Activated naive CD4-positive, alpha-beta T cell treated with anti-CD3 and anti-CD28 coated beads for 36 hours (primary cell): ENCODE measurements at regions of chr16 and their contacts with region 1.

Region 1: DNA sequence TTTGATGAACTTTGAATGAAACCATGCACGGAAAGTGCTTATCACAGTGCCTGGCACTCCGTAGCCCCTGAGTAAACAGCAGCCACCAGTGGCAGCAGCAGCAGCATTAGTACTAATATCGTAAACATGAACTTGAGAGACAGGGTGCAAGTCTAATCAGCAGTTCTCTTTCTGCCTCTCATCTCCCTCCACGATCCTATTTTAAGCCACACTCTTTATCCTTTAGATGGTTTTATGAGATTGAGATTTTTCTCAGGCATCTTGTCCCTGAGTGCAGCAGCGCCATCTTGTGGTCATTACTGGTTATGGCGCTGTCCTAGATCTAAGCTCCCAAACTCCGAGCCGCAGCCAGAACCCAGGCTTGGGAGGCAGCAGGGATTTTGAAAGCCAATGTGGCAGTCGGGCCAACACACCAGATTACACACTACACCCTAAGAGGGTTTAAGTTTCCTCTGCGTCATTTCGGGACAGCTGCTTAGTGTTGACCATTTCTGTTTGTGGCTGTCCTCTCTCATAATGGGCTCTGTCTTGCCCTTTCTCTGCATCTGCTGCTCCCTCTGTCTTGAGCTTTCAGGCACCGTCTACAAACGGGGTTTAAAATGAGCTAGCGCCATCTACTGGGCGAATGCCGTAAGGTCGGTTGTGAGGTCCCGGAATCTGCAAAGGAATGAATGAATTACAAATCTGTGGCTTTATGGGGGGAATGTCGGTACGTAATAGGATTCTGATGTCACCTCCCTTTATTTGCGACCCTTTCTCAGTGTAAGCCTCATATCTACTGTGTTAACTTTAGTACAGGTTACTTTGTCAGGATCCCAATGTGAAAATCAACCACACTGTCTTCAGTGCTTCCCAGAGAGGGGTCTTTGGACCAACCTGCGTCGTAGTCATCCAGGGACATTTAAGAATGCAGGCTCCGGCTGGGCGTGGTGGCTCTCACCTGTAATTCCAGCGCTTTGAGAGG is 64.5 kb downstream of the CYLD start:
- DNase-seq: peak; percentile 94
- H3K4me3 Mint-ChIP-seq: peak overlapping the region; percentile 74
- H3K27ac Mint-ChIP-seq: peak overlapping the region; percentile 51
- H3K4me1 Mint-ChIP-seq: peaks cover 10% of the 10 kb centered on the region
- H3K27me3 Mint-ChIP-seq: no peaks in the 10 kb centered on the region

Region 2: DNA sequence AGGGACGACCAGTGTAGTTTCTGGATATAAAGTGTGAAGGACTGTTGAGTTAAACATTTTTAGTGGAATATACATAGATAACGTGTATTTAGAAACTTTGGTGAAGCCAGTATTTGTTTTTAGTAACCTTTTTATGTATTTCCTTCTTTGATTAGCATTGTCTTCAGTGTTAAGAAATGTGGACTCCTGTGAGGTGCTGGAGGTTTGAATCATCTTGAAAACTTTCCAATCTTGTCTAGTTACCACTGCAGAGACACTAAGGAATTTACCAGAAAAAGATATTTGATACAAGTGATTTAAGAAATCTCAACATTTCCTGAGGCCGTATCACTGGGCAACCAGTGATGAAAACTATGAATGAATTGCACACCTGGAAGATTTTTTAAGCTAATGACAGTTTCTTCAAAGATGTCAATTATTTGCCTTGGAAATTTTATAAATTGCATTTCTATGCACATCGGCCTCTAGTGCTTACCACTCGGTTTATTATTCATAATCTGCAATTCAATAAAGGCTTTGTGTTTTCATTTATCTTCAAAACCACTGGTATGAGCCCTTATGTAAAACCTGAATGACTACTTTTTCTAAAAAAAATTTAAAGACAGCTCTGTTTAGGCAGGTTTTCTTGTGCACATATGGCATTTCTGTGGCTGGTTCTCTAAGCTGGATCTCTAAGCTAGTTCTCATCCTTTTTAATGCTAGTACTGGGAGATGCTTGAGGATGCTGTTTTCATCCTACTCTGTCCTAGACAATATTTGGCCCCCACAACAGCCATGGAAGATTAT is 571.4 kb before region 1 on chr16:
- CTCF ChIA-PET with region 1: no interaction called
- intact Hi-C with region 1: loop called (anchors 5 kb)
- DNase-seq: no peak
- H3K4me3 Mint-ChIP-seq: no peak overlapping the region
- H3K27ac Mint-ChIP-seq: no peak overlapping the region
- H3K4me1 Mint-ChIP-seq: no peaks in the 10 kb centered on the region
- H3K27me3 Mint-ChIP-seq: no peaks in the 10 kb centered on the region

Region 3: GRCh38 chr16:50377001-50377400 is 429.4 kb before region 1 on chr16:
- CTCF ChIA-PET with region 1: interaction called, 6 read pairs
- intact Hi-C with region 1: loop called (anchors 1 kb)
- DNase-seq: no peak
- H3K4me3 Mint-ChIP-seq: no peak overlapping the region
- H3K27ac Mint-ChIP-seq: no peak overlapping the region
- H3K4me1 Mint-ChIP-seq: peaks cover 3% of the 10 kb centered on the region
- H3K27me3 Mint-ChIP-seq: no peaks in the 10 kb centered on the region

Region 4: DNA sequence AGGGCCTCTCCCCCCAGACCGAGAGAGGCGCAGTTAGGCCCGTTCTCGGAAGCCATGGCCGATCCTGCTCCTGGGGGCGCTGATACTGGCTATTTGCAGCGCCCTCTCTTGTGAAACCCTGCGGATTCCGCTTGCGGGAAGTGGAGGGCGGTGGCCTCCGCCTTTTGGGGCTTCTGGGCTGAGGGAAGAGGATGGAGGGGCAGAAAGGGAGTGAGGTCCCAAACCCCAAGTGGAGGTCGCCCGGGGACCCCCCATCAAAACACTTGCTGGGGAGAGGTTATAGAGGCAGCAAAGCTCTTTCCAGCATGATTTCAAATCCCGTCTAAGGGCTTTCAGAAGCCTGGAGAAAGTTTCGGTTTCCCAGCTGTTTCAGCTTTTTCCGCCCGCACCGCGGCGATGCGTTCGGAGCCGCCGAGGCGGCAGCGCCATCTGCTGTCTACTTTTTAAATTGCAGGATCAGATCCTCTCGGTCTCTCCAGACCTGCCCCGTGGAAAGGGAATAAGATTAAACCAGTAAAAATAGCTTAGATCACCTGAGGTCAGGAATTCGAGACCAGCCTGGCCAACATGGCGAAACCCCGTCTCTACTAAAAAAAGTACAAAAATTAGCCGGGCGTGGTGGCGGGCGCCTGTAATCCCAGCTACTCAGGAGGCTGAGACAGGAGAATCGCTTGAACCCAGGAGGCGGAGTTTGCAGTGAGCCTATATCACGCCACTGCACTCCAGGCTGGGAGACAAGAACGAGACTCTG is 141.1 kb before region 1 on chr16:
- CTCF ChIA-PET with region 1: interaction called, 347 read pairs
- intact Hi-C with region 1: loop called (anchors 1 kb)
- DNase-seq: peak; percentile 89
- H3K4me3 Mint-ChIP-seq: peak overlapping the region; percentile 57
- H3K27ac Mint-ChIP-seq: peak overlapping the region; percentile 72
- H3K4me1 Mint-ChIP-seq: peaks cover 29% of the 10 kb centered on the region
- H3K27me3 Mint-ChIP-seq: no peaks in the 10 kb centered on the region

Region 5: DNA sequence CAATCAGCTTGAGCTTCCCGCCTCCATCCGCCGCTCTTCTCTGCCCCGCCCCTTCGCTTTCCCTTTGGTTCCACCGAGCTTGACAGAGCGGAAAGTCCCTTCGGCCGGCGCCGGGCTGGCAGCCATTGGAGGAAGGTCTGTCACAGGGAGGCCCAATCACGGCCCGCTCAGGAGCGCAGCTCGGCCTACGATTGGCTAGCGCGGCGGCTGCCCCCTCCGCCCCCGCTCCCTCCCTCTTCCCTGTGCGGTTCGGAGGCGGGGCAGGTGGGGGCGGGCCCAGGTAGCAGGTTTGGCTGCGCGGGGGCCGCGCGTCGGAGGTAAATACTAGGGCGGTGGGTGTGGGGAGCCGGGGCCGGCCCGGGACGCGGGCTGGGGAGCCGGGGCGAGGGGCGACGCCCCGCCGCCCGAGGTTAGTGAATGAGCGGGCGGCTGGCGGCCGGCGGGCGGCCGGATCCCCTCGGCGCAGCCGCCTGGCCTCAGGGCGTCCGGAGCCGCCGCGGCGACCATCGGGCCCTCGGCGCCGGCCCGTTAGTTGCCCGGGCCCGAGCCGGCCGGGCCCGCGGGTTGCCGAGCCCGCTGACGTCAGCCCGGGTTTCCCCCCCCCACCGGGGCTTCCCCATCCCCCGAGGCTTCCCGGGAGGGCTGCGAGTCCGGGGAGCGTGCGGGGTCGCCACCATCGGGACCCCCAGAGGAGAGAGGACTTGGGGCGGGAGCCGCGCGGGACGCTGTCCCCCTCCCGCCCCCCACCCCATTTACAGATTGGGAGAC is 64.4 kb before region 1 on chr16 and contains the start of gene CYLD:
- CTCF ChIA-PET with region 1: interaction called, 54 read pairs
- intact Hi-C with region 1: loop called (anchors 1 kb)
- DNase-seq: peak; percentile 100
- H3K4me3 Mint-ChIP-seq: peak within 1 kb of the TSS; percentile 90
- H3K27ac Mint-ChIP-seq: peak within 1 kb of the TSS; percentile 96
- H3K4me1 Mint-ChIP-seq: peaks cover 42% of the 10 kb centered on the region
- H3K27me3 Mint-ChIP-seq: no peaks in the 10 kb centered on the region
- total RNA-seq, gene CYLD: 70.8 to 71.9 TPM

Region 6: GRCh38 chr16:50781043-50781442 is 25.3 kb before region 1 on chr16:
- CTCF ChIA-PET with region 1: interaction called, 44 read pairs
- intact Hi-C with region 1: no loop called
- DNase-seq: peak; percentile 48
- H3K4me3 Mint-ChIP-seq: peak overlapping the region; percentile 18
- H3K27ac Mint-ChIP-seq: peak overlapping the region; percentile 70
- H3K4me1 Mint-ChIP-seq: peaks cover 51% of the 10 kb centered on the region
- H3K27me3 Mint-ChIP-seq: no peaks in the 10 kb centered on the region

Region 7: DNA sequence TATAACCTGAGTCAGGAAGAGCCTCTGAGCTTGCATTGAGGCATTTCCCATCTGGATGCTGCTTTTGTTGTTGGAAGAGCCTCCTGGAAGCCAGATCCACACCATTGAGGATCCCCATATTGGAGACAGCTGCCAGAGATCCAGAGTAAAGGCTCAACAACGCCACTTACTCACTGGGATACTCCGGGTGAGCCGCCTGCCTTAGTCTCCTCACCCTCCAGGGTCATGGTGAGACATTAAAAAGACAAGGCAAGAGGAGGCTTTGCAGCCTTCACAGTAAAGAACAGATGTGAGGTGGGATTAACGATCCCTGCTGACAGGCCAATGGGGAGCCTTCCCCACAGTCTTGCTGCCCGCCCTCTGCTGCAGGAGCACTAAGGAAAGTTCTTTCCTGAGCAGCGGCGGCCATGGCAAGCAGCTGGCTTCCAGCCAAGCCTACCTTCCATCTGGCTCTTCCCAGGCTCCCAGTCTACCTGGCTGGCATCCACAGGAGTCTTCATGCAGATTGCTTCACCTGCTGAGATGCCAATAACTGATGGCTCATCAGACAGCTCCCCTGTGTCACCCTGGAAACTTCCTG is 134.0 kb after region 1 on chr16:
- CTCF ChIA-PET with region 1: no interaction called
- intact Hi-C with region 1: no loop called
- DNase-seq: no peak
- H3K4me3 Mint-ChIP-seq: no peak overlapping the region
- H3K27ac Mint-ChIP-seq: no peak overlapping the region
- H3K4me1 Mint-ChIP-seq: no peaks in the 10 kb centered on the region
- H3K27me3 Mint-ChIP-seq: peaks cover 2% of the 10 kb centered on the region

Region 8: DNA sequence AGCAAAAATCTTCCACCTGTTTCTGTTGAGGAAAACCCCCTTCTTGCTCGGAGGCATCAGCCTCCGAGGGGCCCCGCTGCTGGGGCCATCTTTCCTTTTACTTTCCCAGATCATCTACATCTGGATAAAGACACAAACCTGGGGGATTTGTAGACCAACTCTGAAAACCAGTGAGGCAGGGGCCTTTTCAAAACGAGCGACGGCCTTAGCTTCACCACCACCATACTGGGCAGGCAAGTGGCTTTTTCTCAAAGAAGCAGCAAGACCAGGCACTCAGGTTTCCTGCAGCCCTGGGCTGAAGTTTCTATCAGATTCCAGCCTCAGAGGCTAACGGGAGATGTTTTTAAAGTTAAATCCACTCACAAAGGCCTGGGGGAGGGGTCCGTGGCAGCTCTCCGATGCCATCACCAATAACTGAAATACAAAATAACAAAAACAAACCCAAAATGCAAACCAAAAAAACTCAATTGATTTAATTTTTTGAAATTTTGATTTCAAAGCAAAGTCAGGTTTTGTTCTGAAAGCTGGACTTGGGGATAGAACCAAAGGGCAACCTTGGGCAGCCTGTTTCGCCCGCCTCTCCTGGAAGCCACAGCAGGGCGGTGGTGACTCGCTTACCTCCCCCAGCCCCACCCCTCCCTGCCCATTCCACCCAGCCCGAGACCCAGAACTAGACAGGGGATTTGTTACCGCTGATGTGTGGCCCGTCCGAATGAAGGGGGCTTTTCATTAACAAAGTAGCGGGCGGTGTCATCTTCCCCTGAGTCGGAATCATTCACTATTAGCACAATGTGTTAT is 288.9 kb after region 1 on chr16:
- CTCF ChIA-PET with region 1: no interaction called
- intact Hi-C with region 1: no loop called
- DNase-seq: no peak
- H3K4me3 Mint-ChIP-seq: no peak overlapping the region
- H3K27ac Mint-ChIP-seq: no peak overlapping the region
- H3K4me1 Mint-ChIP-seq: no peaks in the 10 kb centered on the region
- H3K27me3 Mint-ChIP-seq: no peaks in the 10 kb centered on the region

Region 9: GRCh38 chr16:51175081-51175480 is 368.7 kb after region 1 on chr16:
- CTCF ChIA-PET with region 1: no interaction called
- intact Hi-C with region 1: no loop called
- DNase-seq: no peak
- H3K4me3 Mint-ChIP-seq: no peak overlapping the region
- H3K27ac Mint-ChIP-seq: no peak overlapping the region
- H3K4me1 Mint-ChIP-seq: no peaks in the 10 kb centered on the region
- H3K27me3 Mint-ChIP-seq: no peaks in the 10 kb centered on the region